Heart right ventricle (tissue), 16 donors: ENCODE measurements at regions of chr6 and their contacts with region 1.

Region 1: DNA sequence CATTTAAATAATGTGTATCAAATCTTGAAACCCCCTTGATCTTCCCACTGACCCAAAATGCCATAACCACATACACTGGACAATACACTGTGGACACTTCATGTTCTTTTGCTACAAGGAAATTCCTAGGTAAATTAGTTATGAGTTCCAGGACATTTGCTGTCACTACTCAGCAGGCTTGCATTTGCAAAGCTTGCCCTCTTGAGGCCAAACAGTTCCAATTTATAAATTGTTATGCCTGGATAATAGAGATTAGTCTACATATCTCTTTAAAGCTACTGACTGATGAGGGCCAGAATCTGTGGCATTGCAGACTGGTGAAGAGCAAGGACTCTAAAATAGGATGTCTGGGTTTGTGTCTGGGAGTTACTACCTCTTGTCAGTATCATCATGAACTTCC is 17.4 kb upstream of the RAB32 start:
- DNase-seq: no peak
- ATAC-seq: no peak
- H3K4me3 ChIP-seq: no peak overlapping the region
- H3K27ac ChIP-seq: no peak overlapping the region
- H3K4me1 ChIP-seq: no peaks in the 10 kb centered on the region
- H3K27me3 ChIP-seq: no peaks in the 10 kb centered on the region
- CTCF ChIP-seq: peak in 6 of 9 donors; percentile 27 to 43 (median 35)

Region 2: DNA sequence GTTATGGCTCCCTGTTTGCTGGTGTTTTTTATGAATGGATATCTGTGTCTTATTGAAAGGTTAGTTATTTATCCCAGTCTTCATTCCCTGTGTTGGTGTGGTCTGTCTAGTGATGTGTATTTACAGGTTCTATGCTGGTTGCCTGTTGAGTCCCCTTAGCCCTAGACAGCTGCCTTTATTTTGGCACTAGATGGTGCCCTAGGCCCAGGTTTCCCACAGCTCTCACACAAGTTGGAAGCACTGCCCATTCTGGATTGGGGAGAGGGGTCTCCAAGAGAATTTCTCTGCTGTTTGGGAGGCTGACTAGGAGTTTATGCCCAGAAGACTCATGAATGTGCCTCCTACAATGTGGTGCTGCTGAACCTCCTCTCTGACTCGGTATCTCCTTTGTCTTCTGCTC is 484.9 kb before region 1 on chr6:
- intact Hi-C with region 1: loop called in 1 of 10 experiments (anchors 5 kb)
- DNase-seq: no peak
- ATAC-seq: no peak
- H3K4me3 ChIP-seq: no peak overlapping the region
- H3K27ac ChIP-seq: no peak overlapping the region
- H3K4me1 ChIP-seq: no peaks in the 10 kb centered on the region
- H3K27me3 ChIP-seq: peaks cover 0 to 3% (median 0%) of the 10 kb centered on the region in 7 donors
- CTCF ChIP-seq: peak in 6 of 9 donors; percentile 20 to 34 (median 30)